ENCODE measurements at regions of chr17 and their contacts with region 1.

Region 1: GRCh38 chr17:75601057-75602051 is 13.8 kb downstream of the MYO15B start:
- DNase-seq: peak; percentile 96
- ATAC-seq: peak; percentile 89
- H3K4me3 ChIP-seq: peak overlapping the region in 1 of 2 experiments; percentile 30; a peak in 2 of 4 replicates
- H3K27ac ChIP-seq: peak overlapping the region; percentile 2; the same call in 1 of the 2 replicates
- H3K4me1 ChIP-seq: peaks cover 15 to 51% of the 10 kb centered on the region in 2 experiments
- H3K27me3 ChIP-seq: no peaks in the 10 kb centered on the region
- CTCF ChIP-seq: peak; percentile 95 to 100 (median 99); a peak in 5 of 6 replicates
- POLR2A ChIP-seq: no peak
- RAD21 ChIP-seq: peak; percentile 87

Region 2: DNA sequence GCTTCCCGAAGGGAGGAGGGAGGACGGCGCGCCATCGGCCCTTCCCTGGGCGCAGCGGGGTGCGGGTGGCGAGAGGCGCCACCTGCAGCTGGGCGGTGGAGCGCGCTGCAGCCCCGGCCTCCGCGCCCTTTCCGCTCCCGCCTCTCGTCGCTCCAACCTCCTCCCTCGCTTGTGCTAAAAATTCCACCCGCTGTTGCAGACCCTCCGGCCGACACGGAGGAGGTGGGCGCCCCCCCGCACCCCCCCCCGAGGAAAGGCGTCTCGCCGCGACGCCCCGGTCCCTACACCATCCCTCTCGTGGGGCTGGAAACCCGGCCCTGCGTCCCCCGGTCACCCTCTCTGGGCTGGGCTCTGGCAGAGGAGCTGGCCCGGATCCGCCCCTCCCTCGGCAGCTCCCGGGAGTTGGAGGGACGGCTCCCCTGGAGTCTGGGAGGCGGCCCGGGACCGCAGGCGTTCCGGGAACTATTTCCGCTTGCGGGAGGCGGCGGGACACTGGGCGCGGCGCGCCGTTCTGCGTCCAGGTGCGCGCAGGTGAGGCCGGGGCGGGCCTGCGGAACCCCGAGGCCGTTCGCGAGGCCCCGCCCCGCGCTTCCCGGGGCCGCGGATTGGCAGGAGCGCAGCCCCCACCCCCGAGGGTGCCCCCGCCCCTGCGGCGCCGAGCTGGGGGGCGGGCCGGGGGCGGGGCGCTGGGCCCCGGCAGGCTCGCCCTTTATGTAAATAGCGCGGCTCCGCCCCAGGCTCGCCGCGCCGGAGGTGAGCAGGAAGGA is 76.2 kb before region 1 on chr17 and contains the start of gene LLGL2:
- CTCF ChIA-PET with region 1: interaction called, 15 read pairs
- POLR2A ChIA-PET with region 1: no interaction called
- RAD21 ChIA-PET with region 1: interaction called in 1 of 2 experiments, 4 read pairs
- intact Hi-C with region 1: no loop called
- DNase-seq: peak; percentile 86
- ATAC-seq: peak; percentile 85
- H3K4me3 ChIP-seq: peak within 1 kb of the TSS; percentile 68 to 86
- H3K27ac ChIP-seq: peak within 1 kb of the TSS; percentile 98
- H3K4me1 ChIP-seq: peaks cover 20 to 37% of the 10 kb centered on the region in 2 experiments
- H3K27me3 ChIP-seq: no peaks in the 10 kb centered on the region
- CTCF ChIP-seq: peak in 2 of 3 experiments; percentile 50 to 60
- POLR2A ChIP-seq: peak; percentile 61
- RAD21 ChIP-seq: peak; percentile 49; the same call in 1 of the 2 replicates
- total RNA-seq, gene LLGL2: 209 TPM

Region 3: GRCh38 chr17:75589012-75589918 is 12.1 kb before region 1 on chr17:
- CTCF ChIA-PET with region 1: interaction called, 45 read pairs
- POLR2A ChIA-PET with region 1: interaction called, 3 read pairs
- RAD21 ChIA-PET with region 1: interaction called in 1 of 2 experiments, 3 read pairs
- intact Hi-C with region 1: no loop called
- DNase-seq: peak; percentile 71
- ATAC-seq: peak; percentile 93
- H3K4me3 ChIP-seq: peak overlapping the region; percentile 38 to 39
- H3K27ac ChIP-seq: peak overlapping the region; percentile 60; the same call in 1 of the 2 replicates
- H3K4me1 ChIP-seq: peaks cover 10 to 31% of the 10 kb centered on the region in 2 experiments; a peak in 3 of 4 replicates
- H3K27me3 ChIP-seq: no peaks in the 10 kb centered on the region
- CTCF ChIP-seq: peak; percentile 37 to 58 (median 42); a peak in 5 of 6 replicates
- POLR2A ChIP-seq: no peak
- RAD21 ChIP-seq: no peak; the same call in 1 of the 2 replicates

Region 4: DNA sequence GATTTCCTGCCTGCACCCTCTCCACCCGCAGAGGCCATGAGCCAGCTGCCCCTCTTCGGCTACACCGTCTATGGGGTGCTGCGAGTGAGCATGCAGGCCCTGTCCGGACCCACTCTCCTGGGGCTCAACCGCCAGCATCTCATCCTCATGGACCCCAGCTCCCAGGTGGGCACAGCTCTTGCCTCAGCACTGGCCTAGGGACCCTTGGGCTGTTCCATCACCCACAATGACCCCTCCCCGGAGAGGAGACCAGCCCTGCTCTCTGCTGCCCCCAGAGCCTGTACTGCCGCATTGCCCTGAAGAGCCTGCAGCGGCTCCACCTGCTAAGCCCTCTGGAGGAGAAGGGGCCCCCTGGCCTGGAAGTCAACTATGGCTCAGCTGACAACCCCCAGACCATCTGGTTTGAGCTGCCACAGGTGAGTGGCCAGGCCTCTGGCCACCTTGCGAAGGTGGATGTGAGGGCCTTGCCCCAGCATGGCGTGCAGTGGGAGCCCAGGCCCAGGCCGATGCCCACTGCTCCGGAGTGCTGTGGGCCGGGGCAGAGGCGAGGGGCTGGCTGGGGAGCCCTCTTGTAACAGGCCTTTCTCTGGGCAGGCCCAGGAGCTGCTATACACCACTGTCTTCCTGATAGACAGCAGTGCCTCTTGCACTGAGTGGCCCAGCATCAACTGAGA is 24.6 kb after region 1 on chr17:
- CTCF ChIA-PET with region 1: interaction called, 13 read pairs
- POLR2A ChIA-PET with region 1: interaction called, 5 read pairs
- RAD21 ChIA-PET with region 1: no interaction called
- intact Hi-C with region 1: no loop called
- DNase-seq: no peak
- ATAC-seq: peak; percentile 86
- H3K4me3 ChIP-seq: no peak overlapping the region
- H3K27ac ChIP-seq: no peak overlapping the region; the same call in 1 of the 2 replicates
- H3K4me1 ChIP-seq: no peaks in the 10 kb centered on the region; a peak in 1 of 4 replicates
- H3K27me3 ChIP-seq: no peaks in the 10 kb centered on the region
- CTCF ChIP-seq: peak; percentile 67 to 99 (median 98); a peak in 5 of 6 replicates
- POLR2A ChIP-seq: no peak
- RAD21 ChIP-seq: peak; percentile 57

Region 5: DNA sequence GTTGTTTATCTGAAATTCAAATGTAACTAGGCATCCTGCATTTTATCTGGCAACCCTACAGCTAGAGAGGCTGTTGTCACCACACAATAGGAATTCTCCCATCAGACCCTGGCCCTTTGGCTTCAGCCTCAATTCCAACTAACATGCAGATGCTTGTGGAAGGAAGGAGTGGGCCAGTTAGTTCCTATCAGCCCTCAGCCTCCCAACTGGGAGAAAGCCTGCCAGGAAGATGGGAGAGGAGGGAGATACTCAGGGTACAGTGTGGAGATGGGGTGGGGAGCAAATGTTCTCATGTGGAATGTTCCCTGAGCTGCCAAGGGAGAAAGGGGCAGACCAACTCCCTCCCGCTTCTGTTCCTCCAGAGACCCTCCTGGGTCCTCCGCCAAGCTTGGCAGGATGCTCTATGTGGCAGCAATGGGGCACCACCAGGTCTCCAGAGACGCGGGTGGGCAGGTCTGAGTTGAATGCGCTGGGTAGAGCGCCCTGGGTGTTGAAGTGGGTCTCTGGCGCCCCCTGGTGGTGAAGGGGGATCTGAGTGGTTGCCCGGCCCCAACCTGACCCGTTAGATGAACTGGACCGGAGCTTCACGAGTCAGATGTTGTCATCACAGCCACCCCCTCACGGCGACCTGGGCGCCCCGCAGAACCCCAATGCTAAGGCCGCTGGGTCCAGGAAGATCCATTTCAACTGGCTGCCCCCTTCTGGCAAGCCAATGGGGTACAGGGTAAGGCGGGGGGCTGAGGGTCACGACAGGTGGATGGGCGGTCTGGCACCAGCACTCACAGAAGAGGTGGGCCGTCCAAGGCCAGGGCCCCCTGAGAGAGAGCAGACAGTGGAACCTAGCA is 148.4 kb after region 1 on chr17:
- CTCF ChIA-PET with region 1: interaction called, 23 read pairs
- POLR2A ChIA-PET with region 1: no interaction called
- RAD21 ChIA-PET with region 1: interaction called, 3 to 4 read pairs
- intact Hi-C with region 1: no loop called
- DNase-seq: no peak
- ATAC-seq: peak; percentile 81
- H3K4me3 ChIP-seq: no peak overlapping the region
- H3K27ac ChIP-seq: peak overlapping the region; percentile 41; the same call in 1 of the 2 replicates
- H3K4me1 ChIP-seq: peaks cover 0 to 3% of the 10 kb centered on the region in 2 experiments; a peak in 1 of 4 replicates
- H3K27me3 ChIP-seq: no peaks in the 10 kb centered on the region
- CTCF ChIP-seq: peak; percentile 85 to 98 (median 95)
- POLR2A ChIP-seq: no peak
- RAD21 ChIP-seq: peak; percentile 83

Measured in HCT116 (cell line).